Psoas muscle (tissue), 8 donors: ENCODE measurements at regions of chr6 and their contacts with region 1.

Region 1: DNA sequence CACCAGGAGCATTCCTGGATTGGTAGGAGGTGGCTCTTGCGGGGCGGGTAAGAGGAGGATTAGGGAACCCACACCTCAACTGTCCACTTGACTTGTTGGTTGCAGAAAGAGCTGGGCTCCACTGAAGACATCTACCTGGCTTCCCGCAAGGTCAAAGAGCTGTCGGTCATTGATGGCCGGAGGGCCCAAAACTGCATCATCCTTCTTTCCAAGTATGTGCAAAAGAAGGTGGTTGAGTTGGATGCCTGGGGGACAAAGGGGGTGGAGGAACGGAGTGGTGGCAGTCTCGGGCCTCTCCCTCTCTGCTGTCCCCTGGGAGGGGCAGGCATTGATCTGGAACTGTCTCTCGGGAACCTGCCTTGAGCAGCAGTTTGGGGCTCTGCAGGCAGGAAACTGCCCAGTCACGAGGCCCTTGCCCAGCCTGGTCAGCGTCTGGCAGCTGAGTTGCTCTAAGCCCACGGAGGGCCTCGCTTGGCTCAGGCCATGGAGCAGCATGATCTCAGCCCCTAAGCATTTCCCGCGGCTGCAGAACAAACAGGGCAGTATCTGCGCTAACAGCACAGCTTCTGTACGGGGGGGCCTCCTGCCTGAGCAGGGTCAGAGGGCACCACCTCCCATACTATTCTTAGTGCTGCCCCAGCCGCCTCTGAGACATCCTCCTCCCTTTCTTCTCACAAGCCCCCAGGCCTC is 46.7 kb downstream of the MOCS1 start:
- DNase-seq: peak; percentile 77 to 92
- ATAC-seq: peak; percentile 85 to 93 (median 90)
- H3K4me3 ChIP-seq: no peak overlapping the region
- H3K27ac ChIP-seq: peak overlapping the region; percentile 83
- H3K4me1 ChIP-seq: peaks cover 44% of the 10 kb centered on the region
- H3K27me3 ChIP-seq: no peaks in the 10 kb centered on the region
- CTCF ChIP-seq: no peak

Region 2: GRCh38 chr6:39353693-39354315 is 533.7 kb before region 1 on chr6:
- intact Hi-C with region 1: loop called in 1 of 2 experiments (anchors 5 kb)
- DNase-seq: no peak
- ATAC-seq: no peak
- H3K4me3 ChIP-seq: no peak overlapping the region
- H3K27ac ChIP-seq: no peak overlapping the region
- H3K4me1 ChIP-seq: no peaks in the 10 kb centered on the region
- H3K27me3 ChIP-seq: no peaks in the 10 kb centered on the region
- CTCF ChIP-seq: no peak